HEK293T (cell line): ENCODE measurements at regions of chr17 and their contacts with region 1.

Region 1: GRCh38 chr17:76953946-76954345 is 85.7 kb downstream of the MGAT5B start:
- DNase-seq: no peak

Region 2: GRCh38 chr17:76940738-76941350 is 13.1 kb before region 1 on chr17:
- CTCF ChIA-PET with region 1: no interaction called
- POLR2A ChIA-PET with region 1: no interaction called
- DNase-seq: peak; percentile 40

Region 3: GRCh38 chr17:76968707-76969597 is 15.0 kb after region 1 on chr17:
- CTCF ChIA-PET with region 1: interaction called, 4 read pairs
- POLR2A ChIA-PET with region 1: interaction called, 13 read pairs
- DNase-seq: peak; percentile 58